Activated T-helper 2 cell treated with anti-CD3 and anti-CD28 coated beads, Interferon-gamma antibody, Interleukin-2, Interleukin-4, amounts not matched to agents 10 μg/mL and 5 μg/mL and 100 μg/mL, durations not matched to agents 14 hours and 24 hours and 36 hours (primary cell): ENCODE measurements at regions of chr3 and their contacts with region 1.

Region 1: GRCh38 chr3:190513409-190514162 is at the start of gene IL1RAP:
- DNase-seq: peak; percentile 89
- H3K4me3 Mint-ChIP-seq: peak within 1 kb of the TSS; percentile 90
- H3K27ac Mint-ChIP-seq: peak within 1 kb of the TSS; percentile 97
- H3K4me1 Mint-ChIP-seq: peaks cover 39% of the 10 kb centered on the region
- H3K27me3 Mint-ChIP-seq: no peaks in the 10 kb centered on the region
- total RNA-seq, gene IL1RAP: 34.5 and 38.6 TPM in 2 replicates

Region 2: DNA sequence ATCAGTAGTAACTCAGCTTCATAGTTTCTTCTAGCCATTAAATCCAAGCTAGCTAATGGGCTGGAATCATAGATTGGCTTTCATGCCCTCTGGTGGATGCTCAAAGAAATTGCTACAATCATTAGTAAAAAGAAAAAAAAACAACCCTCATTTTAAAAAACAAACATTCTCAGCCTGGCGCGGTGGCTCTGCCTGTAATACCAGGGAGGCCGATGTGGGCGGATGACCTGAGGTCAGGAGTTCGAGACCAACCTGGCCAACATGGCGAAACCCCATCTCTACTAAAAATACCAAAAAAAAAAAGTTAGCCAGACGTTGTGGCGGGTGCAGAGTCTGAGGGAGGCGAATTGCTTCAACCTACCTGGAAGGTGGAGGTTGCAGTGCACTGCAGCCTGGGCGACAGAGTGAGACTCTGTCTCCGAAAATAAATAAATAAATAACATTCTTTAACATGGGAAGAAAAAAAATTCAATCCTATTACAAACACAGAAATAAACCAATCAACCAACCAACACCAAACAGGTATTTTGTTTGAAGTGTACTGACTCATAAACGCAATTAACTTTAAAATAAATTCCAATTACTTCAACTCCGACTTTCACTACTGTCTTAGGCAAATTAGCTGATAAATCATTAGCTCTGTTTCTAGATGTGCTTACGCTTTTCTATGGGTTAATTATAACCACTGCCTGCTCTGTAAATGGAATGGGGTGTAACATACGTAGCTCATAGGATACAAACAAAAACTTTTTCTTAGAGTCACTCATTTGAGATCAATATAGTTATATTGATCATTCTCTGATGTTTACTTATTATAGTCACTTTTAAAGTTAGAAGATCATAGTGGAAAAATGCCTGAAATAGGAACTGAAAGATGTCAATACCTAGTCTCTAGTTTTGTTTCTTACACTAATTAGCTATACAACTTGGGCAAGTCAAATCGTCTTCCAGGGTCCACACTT is 88.8 kb before region 1 on chr3:
- intact Hi-C with region 1: no loop called
- DNase-seq: peak; percentile 28
- H3K4me3 Mint-ChIP-seq: no peak overlapping the region
- H3K27ac Mint-ChIP-seq: peak overlapping the region; percentile 38
- H3K4me1 Mint-ChIP-seq: peaks cover 6% of the 10 kb centered on the region
- H3K27me3 Mint-ChIP-seq: peaks cover 11% of the 10 kb centered on the region

Region 3: GRCh38 chr3:190533511-190534277 is 20.1 kb after region 1 on chr3:
- intact Hi-C with region 1: loop called (anchors 2 kb)
- DNase-seq: no peak
- H3K4me3 Mint-ChIP-seq: no peak overlapping the region
- H3K27ac Mint-ChIP-seq: peak overlapping the region; percentile 42
- H3K4me1 Mint-ChIP-seq: peaks cover 55% of the 10 kb centered on the region
- H3K27me3 Mint-ChIP-seq: no peaks in the 10 kb centered on the region